ENCODE measurements at regions of chr6 and their contacts with region 1.

Region 1: DNA sequence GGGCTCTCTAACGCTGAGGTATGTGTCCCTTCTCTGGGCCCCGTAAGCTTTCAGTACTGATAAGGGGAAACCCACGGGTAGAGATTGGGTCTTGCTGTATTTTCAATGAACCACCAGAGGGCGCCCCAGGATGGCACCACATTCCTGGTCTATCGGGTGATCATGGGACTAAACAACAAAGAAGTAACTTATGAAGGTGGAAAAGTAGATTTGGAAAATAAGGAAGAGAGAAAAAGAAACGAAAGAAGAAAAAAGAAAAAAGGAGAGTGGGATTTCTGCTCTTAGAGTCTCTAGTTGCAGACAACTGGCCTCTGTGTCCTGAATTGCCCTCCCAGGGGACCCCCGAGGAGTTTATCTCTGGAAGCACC is 93.8 kb downstream of the GMPR start:
- DNase-seq: peak; percentile 77
- H3K4me3 Mint-ChIP-seq: no peak overlapping the region
- H3K27ac Mint-ChIP-seq: no peak overlapping the region
- H3K4me1 Mint-ChIP-seq: peaks cover 29% of the 10 kb centered on the region
- H3K27me3 Mint-ChIP-seq: no peaks in the 10 kb centered on the region
- CTCF ChIP-seq: peak; percentile 77

Region 2: GRCh38 chr6:16108921-16109658 is 223.1 kb before region 1 on chr6:
- CTCF ChIA-PET with region 1: no interaction called
- POLR2A ChIA-PET with region 1: no interaction called
- intact Hi-C with region 1: no loop called
- DNase-seq: no peak
- H3K4me3 Mint-ChIP-seq: no peak overlapping the region
- H3K27ac Mint-ChIP-seq: no peak overlapping the region
- H3K4me1 Mint-ChIP-seq: no peaks in the 10 kb centered on the region
- H3K27me3 Mint-ChIP-seq: no peaks in the 10 kb centered on the region
- CTCF ChIP-seq: no peak

Region 3: GRCh38 chr6:16136621-16137450 is 195.3 kb before region 1 on chr6:
- CTCF ChIA-PET with region 1: no interaction called
- POLR2A ChIA-PET with region 1: no interaction called
- intact Hi-C with region 1: no loop called
- DNase-seq: peak; percentile 78
- H3K4me3 Mint-ChIP-seq: peak overlapping the region; percentile 43
- H3K27ac Mint-ChIP-seq: peak overlapping the region; percentile 54
- H3K4me1 Mint-ChIP-seq: peaks cover 29% of the 10 kb centered on the region
- H3K27me3 Mint-ChIP-seq: no peaks in the 10 kb centered on the region
- CTCF ChIP-seq: no peak

Region 4: GRCh38 chr6:16253399-16254144 is 78.6 kb before region 1 on chr6:
- CTCF ChIA-PET with region 1: no interaction called
- POLR2A ChIA-PET with region 1: no interaction called
- intact Hi-C with region 1: no loop called
- DNase-seq: no peak
- H3K4me3 Mint-ChIP-seq: no peak overlapping the region
- H3K27ac Mint-ChIP-seq: no peak overlapping the region
- H3K4me1 Mint-ChIP-seq: peaks cover 11% of the 10 kb centered on the region
- H3K27me3 Mint-ChIP-seq: no peaks in the 10 kb centered on the region
- CTCF ChIP-seq: no peak

Region 5: GRCh38 chr6:16319813-16320532 is 12.2 kb before region 1 on chr6:
- CTCF ChIA-PET with region 1: interaction called, 24 read pairs
- POLR2A ChIA-PET with region 1: no interaction called
- intact Hi-C with region 1: no loop called
- DNase-seq: peak; percentile 81
- H3K4me3 Mint-ChIP-seq: peak overlapping the region; percentile 51
- H3K27ac Mint-ChIP-seq: no peak overlapping the region
- H3K4me1 Mint-ChIP-seq: peaks cover 23% of the 10 kb centered on the region
- H3K27me3 Mint-ChIP-seq: no peaks in the 10 kb centered on the region
- CTCF ChIP-seq: no peak

Region 6: DNA sequence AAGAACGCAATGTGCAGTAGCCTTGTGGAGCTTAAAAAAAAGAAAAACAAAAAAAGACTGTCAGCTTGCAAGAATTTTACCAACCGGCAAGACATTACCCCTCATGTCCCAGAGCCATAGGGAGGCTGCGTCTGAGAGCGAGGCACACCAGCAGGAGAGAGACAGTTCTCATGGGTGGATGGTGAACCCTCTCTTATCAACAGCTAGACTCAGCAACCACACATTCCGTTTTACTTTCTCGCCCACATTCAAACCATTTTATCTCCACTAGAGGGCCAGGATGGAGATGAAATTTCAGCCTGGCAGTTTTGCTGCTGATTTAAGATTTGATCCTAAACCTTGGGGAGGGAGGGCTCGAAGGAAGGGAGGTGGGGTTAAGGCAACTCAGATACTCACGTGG is 182.1 kb after region 1 on chr6:
- CTCF ChIA-PET with region 1: interaction called, 10 read pairs
- POLR2A ChIA-PET with region 1: interaction called, 5 read pairs
- intact Hi-C with region 1: loop called (anchors 1 kb)
- DNase-seq: peak; percentile 29
- H3K4me3 Mint-ChIP-seq: no peak overlapping the region
- H3K27ac Mint-ChIP-seq: no peak overlapping the region
- H3K4me1 Mint-ChIP-seq: peaks cover 10% of the 10 kb centered on the region
- H3K27me3 Mint-ChIP-seq: no peaks in the 10 kb centered on the region
- CTCF ChIP-seq: peak; percentile 20

Region 7: GRCh38 chr6:16723826-16724225 is 391.7 kb after region 1 on chr6:
- CTCF ChIA-PET with region 1: interaction called, 10 read pairs
- POLR2A ChIA-PET with region 1: interaction called, 14 read pairs
- intact Hi-C with region 1: no loop called
- DNase-seq: peak; percentile 88
- H3K4me3 Mint-ChIP-seq: peak overlapping the region; percentile 47
- H3K27ac Mint-ChIP-seq: peak overlapping the region; percentile 87
- H3K4me1 Mint-ChIP-seq: peaks cover 37% of the 10 kb centered on the region
- H3K27me3 Mint-ChIP-seq: no peaks in the 10 kb centered on the region
- CTCF ChIP-seq: no peak

Region 8: DNA sequence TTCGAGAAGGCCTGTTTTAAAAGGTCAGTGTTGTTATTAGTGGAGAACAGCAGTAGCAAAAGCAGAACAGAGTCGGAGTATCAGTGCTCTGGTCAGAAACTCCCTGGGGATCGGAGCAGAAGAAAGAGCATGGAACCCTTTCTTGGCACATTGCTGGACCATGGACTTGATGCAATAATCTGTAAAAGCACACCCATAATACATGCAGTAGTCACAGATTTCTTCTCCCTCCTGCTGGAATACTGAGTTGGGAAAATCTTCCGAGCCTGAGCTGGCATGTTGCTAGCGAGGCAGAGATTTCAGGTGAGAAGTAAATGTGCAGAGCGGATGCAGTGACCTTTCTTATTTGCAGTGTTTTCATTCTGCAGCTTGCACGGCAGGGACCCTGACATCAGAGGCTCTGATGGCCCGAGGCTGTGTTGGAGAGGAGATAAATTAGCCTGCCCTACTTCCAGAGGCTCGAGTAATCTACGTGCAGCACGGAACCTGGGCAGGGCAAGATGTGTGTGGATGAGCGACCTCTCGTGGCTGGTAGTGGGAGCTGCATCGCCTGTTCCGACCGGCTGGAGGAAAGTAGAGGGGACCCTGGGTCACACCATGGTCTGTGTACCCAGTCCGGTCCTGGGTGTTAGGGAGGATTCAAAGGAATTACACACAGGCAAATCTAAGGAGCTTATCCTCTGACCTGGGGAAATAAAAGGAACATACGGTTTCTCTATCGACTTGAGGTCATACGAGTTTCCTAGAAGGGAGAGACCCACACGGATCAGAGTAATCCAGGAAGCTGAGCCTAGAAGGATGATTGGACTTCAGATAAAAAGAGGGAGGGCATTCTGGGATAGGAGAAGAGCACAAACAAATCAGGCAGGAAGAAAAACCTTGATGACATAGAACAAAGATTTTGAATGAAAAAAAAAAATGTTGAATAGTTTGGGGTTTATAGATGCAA is 632.7 kb after region 1 on chr6:
- CTCF ChIA-PET with region 1: interaction called, 4 read pairs
- POLR2A ChIA-PET with region 1: interaction called, 3 read pairs
- intact Hi-C with region 1: loop called (anchors 2 kb)
- DNase-seq: peak; percentile 75
- H3K4me3 Mint-ChIP-seq: no peak overlapping the region
- H3K27ac Mint-ChIP-seq: peak overlapping the region; percentile 3
- H3K4me1 Mint-ChIP-seq: peaks cover 5% of the 10 kb centered on the region
- H3K27me3 Mint-ChIP-seq: peaks cover 6% of the 10 kb centered on the region
- CTCF ChIP-seq: peak; percentile 87